BJ (cell line): ENCODE measurements at regions of chr18 and their contacts with region 1.

Region 1: GRCh38 chr18:37385846-37386778 is 179.5 kb downstream of the CELF4 start:
- DNase-seq: no peak
- H3K4me3 ChIP-seq: no peak overlapping the region
- H3K27me3 ChIP-seq: peaks cover 2% of the 10 kb centered on the region; the same call in 1 of the 2 replicates
- CTCF ChIP-seq: peak; percentile 50

Region 2: GRCh38 chr18:37445368-37445767 is 59.3 kb after region 1 on chr18:
- CTCF ChIA-PET with region 1: interaction called, 18 read pairs
- POLR2A ChIA-PET with region 1: no interaction called
- DNase-seq: no peak
- H3K4me3 ChIP-seq: no peak overlapping the region
- H3K27me3 ChIP-seq: peaks cover 3% of the 10 kb centered on the region
- CTCF ChIP-seq: no peak

Region 3: GRCh38 chr18:37457341-37457740 is 71.2 kb after region 1 on chr18:
- CTCF ChIA-PET with region 1: interaction called, 15 read pairs
- POLR2A ChIA-PET with region 1: no interaction called
- DNase-seq: no peak
- H3K4me3 ChIP-seq: no peak overlapping the region
- H3K27me3 ChIP-seq: peaks cover 8% of the 10 kb centered on the region
- CTCF ChIP-seq: no peak

Region 4: DNA sequence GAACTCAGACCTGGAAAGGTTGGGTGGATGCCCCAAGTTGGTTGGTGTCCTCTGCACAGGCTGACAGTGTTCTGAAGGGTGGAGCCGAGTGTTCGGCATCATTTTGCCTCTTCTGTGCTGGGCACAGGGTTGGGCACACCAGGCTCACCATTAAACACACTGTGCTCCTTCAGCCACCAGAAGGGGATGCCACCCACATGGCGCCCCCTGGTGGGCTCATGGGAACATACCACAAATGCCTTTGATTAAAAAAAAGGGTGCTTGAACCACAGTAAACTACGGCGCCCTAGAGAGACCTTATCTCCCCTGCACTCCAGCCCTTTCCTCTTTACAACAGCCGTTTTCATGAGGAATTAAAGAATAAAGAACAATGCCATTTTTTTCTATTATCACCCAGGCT is 90.1 kb after region 1 on chr18:
- CTCF ChIA-PET with region 1: interaction called, 37 read pairs
- POLR2A ChIA-PET with region 1: no interaction called
- DNase-seq: no peak
- H3K4me3 ChIP-seq: no peak overlapping the region
- H3K27me3 ChIP-seq: peaks cover 5% of the 10 kb centered on the region
- CTCF ChIP-seq: peak; percentile 73

Region 5: DNA sequence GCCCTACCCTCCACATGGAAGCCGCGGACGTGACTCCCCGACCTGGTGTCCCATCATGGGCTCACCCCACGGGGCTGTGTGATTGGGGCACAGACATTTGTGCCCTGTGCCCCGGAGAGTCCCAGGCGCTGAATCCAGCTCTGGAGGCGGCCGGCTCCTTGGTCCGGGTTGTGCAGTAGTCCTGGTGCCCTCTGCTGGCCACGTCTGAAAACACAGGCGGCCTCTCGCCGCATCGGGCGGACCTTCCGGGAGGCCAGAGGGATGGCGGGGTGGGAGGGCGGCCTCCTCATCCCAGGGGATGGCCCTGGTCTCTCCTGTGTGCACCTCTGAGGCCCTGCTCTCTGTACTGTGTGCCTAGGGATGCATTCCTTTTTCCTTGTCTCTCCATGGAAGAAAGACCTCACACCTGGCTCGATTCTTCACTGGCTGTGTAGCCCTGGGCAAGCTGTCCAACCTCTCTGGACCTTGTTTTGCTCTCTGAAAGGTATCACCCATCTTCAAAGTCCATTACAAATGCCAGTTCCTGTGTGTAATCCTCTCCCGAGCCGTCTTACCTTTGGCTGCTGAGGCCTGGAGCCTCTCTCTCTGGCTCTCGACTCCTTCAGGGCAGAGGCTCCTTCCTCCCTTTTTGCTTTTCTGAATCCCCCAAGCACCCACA is 151.9 kb after region 1 on chr18:
- CTCF ChIA-PET with region 1: interaction called, 40 read pairs
- POLR2A ChIA-PET with region 1: no interaction called
- DNase-seq: no peak
- H3K4me3 ChIP-seq: no peak overlapping the region
- H3K27me3 ChIP-seq: peaks cover 11% of the 10 kb centered on the region
- CTCF ChIP-seq: peak; percentile 95